ENCODE measurements at regions of chr1 and their contacts with region 1.

Region 1: DNA sequence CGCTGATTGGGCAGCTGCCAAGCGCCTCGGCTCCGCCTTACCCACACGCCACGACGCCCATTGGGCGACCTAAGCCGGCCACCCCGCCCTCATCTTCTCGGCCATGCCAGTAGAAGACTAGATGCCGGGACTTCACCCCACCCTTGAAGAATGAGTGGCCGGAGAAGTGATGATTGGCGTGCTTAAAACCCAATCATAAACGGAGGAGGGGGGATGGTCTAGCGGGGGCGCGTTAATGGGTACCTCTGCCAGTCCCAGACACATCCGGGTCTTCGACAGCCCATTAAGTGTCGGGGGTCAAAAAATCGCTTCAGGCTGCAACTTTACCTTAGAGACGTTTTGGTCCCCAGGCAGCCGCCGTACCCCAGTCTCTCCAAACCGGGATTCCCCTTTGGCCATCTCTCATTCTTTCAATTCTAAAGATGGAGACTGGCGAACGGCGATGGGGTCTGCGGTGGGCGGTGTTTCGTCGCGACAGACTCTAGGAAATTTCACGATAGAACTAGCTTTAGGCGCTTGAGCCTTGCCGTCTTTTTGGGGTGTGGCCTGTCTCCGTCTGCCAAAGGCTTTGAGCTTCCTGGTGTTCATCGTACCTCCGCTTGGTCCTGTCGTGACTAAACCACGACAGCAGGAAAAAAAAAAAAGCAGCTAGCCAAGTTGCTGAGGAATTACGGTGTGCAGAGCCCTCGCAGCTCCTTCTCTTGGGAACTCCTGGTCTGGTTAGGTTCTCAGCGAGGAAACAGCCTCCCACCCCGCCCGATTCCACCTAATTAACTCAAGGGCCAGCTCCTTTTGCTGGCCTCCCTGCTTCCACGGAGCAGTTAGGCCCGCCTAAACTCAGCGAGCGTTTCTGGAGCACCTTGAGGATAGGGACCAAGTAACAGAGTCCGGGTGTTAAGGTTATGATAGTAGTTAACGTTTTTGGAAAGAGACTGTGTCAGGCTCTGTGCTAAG is at the start of gene GATAD2B:
- DNase-seq: peak; percentile 99
- H3K4me3 Mint-ChIP-seq: peak within 1 kb of the TSS; percentile 94
- H3K27ac Mint-ChIP-seq: peak within 1 kb of the TSS; percentile 94
- H3K4me1 Mint-ChIP-seq: peaks cover 35% of the 10 kb centered on the region
- H3K27me3 Mint-ChIP-seq: no peaks in the 10 kb centered on the region
- total RNA-seq, gene GATAD2B: 70.0 and 70.2 TPM in 2 replicates

Region 2: DNA sequence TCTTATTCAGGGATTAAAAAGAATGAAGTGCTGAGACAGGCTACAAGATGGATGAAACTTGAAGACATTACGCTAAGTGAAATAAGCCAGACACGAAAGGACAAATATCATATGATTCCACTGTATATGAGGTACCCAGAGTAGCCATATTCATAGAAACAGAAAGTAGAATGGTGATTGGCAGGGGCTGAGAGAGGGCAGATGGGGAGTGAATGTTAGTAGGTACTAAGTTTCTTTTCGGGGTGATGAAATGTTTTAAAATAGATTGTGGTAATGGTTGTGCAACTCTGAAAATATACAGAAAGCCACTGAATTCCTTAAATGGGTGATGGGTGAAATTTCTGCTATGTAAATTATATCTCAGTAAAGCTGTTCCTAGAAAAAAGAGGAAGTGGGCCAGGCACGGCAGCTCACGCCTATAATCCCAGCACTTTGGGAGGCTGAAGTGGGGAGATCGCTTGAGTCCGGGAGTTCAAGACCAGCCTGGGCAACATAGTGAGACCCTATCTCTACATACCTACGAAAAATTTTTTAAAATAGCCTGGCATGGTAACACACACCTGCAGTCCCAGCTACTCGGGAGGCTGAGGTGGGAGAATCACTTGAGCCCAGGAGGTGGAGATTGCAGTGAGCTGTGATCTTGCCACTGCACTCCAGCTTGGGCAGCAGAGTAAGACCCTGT is 132.1 kb before region 1 on chr1:
- intact Hi-C with region 1: loop called (anchors 5 kb)
- DNase-seq: peak; percentile 24
- H3K4me3 Mint-ChIP-seq: peak overlapping the region; percentile 52
- H3K27ac Mint-ChIP-seq: peak overlapping the region; percentile 93
- H3K4me1 Mint-ChIP-seq: peaks cover 31% of the 10 kb centered on the region
- H3K27me3 Mint-ChIP-seq: no peaks in the 10 kb centered on the region

Region 3: GRCh38 chr1:153849487-153850185 is 73.6 kb before region 1 on chr1:
- intact Hi-C with region 1: loop called (anchors 5 kb)
- DNase-seq: no peak
- H3K4me3 Mint-ChIP-seq: peak overlapping the region; percentile 17
- H3K27ac Mint-ChIP-seq: peak overlapping the region; percentile 91
- H3K4me1 Mint-ChIP-seq: peaks cover 21% of the 10 kb centered on the region
- H3K27me3 Mint-ChIP-seq: no peaks in the 10 kb centered on the region

Region 4: DNA sequence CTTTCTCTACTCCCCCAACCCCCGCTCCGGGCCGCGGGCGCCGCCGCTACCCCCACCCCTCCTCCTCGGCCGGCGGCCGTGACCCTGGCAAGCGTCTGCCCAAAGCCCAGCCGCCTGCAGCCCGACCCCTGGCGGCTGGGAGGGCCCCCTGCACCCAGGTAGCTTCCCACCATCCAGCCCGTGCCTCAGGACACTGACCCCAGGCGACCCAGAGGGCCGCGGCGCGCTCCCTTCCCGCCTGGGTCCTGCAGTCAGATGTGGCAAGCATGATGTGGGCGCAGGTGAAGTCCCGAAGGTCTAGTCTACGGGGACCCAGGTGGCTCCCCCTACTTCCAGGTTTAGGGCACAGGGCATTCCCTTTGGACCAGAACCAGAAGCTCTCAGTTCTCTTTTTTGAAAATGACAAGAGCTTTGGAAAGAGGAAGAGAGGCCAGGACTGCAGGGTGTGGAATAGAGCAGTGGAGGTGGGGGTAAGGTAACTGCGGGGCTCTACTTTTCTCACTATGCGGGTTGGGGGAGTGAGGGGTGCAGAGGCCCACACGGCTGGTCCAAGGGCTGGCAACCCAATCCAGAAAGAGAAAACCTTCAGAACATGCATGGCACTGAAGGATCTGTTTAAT is 23.5 kb after region 1 on chr1 and contains the start of gene DENND4B:
- intact Hi-C with region 1: loop called (anchors 1 kb)
- DNase-seq: peak; percentile 70
- H3K4me3 Mint-ChIP-seq: peak within 1 kb of the TSS; percentile 96
- H3K27ac Mint-ChIP-seq: peak within 1 kb of the TSS; percentile 95
- H3K4me1 Mint-ChIP-seq: peaks cover 22% of the 10 kb centered on the region
- H3K27me3 Mint-ChIP-seq: no peaks in the 10 kb centered on the region
- total RNA-seq, gene DENND4B: 124 TPM in 2 replicates

Region 5: GRCh38 chr1:153990468-153991150 is 67.4 kb after region 1 on chr1 and contains the start of gene RPS27:
- intact Hi-C with region 1: loop called (anchors 1 kb)
- DNase-seq: peak; percentile 88
- H3K4me3 Mint-ChIP-seq: peak within 1 kb of the TSS; percentile 88
- H3K27ac Mint-ChIP-seq: peak within 1 kb of the TSS; percentile 92
- H3K4me1 Mint-ChIP-seq: peaks cover 39% of the 10 kb centered on the region
- H3K27me3 Mint-ChIP-seq: no peaks in the 10 kb centered on the region
- total RNA-seq, gene RPS27: 1,296 and 1,372 TPM in 2 replicates